Right lobe of liver (tissue), 6 donors: ENCODE measurements at regions of chr5 and their contacts with region 1.

Region 1: DNA sequence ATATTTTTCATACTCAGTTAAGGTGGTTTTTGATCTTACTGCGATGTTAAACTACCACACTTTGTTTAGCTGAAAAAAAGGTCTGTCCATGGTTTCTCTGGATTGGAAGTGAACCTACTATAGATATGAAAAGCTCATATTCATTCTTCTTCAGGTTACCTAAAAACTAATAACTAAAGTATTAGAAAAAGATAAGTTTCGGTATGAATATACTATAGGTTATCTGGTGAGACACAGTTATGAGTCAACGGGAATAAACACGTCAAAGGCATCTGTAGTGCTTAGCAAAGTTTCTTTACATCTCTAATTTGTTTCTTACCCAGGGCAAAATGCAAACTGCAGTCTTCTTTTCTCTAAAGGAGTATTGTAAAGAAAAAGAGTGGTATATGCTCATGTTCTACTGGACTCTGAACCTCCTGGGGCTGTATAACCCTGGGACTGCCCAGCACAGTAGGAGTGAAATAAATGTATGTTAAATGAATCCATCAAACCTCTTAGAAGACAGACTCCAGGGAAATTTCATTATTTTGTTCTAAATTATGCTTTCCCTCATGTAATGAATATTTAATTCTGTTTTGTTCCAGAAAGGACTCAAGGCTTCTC is 521.9 kb downstream of the PDE4D start:
- DNase-seq: no peak
- ATAC-seq: no peak
- H3K4me3 ChIP-seq: no peak overlapping the region
- H3K27ac ChIP-seq: no peak overlapping the region
- H3K4me1 ChIP-seq: no peaks in the 10 kb centered on the region
- H3K27me3 ChIP-seq: no peaks in the 10 kb centered on the region
- CTCF ChIP-seq: no peak
- POLR2A ChIP-seq: no peak

Region 2: GRCh38 chr5:59188419-59189225 is 183.0 kb before region 1 on chr5:
- intact Hi-C with region 1: loop called in 1 of 2 experiments (anchors 10 kb)
- DNase-seq: peak; percentile 64 to 74 (median 72)
- ATAC-seq: peak; percentile 88 to 98 (median 96)
- H3K4me3 ChIP-seq: peak overlapping the region in 1 of 3 donors; percentile 28
- H3K27ac ChIP-seq: no peak overlapping the region
- H3K4me1 ChIP-seq: no peaks in the 10 kb centered on the region
- H3K27me3 ChIP-seq: no peaks in the 10 kb centered on the region
- CTCF ChIP-seq: peak; percentile 71 to 83 (median 75)
- POLR2A ChIP-seq: no peak

Region 3: DNA sequence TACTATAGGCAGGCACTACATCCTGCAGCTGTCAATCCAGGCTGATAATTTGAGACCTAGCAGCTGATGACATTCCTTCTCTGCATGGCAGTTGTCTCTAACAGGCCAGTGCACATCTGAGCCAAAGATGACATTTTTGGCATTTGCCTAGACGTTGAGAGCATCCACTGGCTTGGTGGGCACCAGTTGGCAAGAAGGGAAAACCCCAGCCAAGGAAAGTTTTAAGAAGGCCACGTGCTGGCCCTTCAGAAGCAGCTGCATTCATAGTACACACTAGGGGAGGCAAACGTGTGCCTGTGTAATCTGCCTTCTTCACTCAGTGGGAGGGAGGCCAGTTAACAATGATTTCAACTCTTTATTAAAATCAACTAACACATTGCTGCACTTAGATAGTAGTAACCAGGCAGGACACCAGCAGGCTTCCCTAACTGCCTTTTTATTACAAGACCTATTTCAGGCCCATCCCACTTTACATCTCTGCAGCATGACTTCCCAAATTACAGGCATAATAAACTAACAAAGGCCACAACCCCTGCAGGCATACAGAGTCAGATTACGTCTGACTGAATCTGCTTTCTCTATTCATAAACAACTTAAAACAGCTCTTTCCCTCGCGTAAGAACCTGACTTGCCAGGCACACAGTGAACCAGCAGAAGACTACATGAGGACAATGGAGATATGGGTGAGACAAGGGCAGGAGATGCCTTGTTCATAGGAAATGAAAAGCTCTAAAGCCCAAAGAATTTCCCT is 54.4 kb before region 1 on chr5:
- intact Hi-C with region 1: no loop called
- DNase-seq: no peak
- ATAC-seq: peak in 2 of 4 donors; percentile 17 to 30
- H3K4me3 ChIP-seq: no peak overlapping the region
- H3K27ac ChIP-seq: no peak overlapping the region
- H3K4me1 ChIP-seq: no peaks in the 10 kb centered on the region
- H3K27me3 ChIP-seq: no peaks in the 10 kb centered on the region
- CTCF ChIP-seq: no peak
- POLR2A ChIP-seq: no peak

Region 4: GRCh38 chr5:59466271-59466670 is 94.6 kb after region 1 on chr5:
- intact Hi-C with region 1: no loop called
- DNase-seq: peak in 2 of 3 donors; percentile 23 to 55
- ATAC-seq: peak; percentile 83 to 98 (median 98)
- H3K4me3 ChIP-seq: no peak overlapping the region
- H3K27ac ChIP-seq: peak overlapping the region; percentile 30 to 77 (median 73)
- H3K4me1 ChIP-seq: peaks cover 0 to 18% (median 3%) of the 10 kb centered on the region in 4 donors
- H3K27me3 ChIP-seq: no peaks in the 10 kb centered on the region
- CTCF ChIP-seq: no peak
- POLR2A ChIP-seq: no peak

Region 5: DNA sequence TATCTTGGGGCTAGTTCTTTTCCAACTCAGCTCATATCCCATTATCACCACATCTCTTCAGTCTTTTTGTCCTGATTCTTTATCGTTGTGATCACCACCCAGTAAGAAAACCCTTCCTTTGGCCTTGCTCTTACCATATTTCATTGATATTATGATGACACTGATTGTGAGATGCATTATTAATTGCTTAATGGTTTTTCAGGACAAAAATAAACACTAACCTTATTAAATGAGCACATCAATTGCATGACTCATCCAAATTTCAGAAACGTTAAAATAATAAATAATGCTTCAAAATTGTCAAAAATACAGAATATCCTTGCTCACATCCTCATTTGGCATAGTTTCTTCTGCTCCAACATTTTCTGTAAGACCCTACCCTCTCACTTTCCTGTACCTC is 251.2 kb after region 1 on chr5:
- intact Hi-C with region 1: no loop called
- DNase-seq: no peak
- ATAC-seq: no peak
- H3K4me3 ChIP-seq: no peak overlapping the region
- H3K27ac ChIP-seq: no peak overlapping the region
- H3K4me1 ChIP-seq: no peaks in the 10 kb centered on the region
- H3K27me3 ChIP-seq: no peaks in the 10 kb centered on the region
- CTCF ChIP-seq: no peak
- POLR2A ChIP-seq: no peak

Region 6: DNA sequence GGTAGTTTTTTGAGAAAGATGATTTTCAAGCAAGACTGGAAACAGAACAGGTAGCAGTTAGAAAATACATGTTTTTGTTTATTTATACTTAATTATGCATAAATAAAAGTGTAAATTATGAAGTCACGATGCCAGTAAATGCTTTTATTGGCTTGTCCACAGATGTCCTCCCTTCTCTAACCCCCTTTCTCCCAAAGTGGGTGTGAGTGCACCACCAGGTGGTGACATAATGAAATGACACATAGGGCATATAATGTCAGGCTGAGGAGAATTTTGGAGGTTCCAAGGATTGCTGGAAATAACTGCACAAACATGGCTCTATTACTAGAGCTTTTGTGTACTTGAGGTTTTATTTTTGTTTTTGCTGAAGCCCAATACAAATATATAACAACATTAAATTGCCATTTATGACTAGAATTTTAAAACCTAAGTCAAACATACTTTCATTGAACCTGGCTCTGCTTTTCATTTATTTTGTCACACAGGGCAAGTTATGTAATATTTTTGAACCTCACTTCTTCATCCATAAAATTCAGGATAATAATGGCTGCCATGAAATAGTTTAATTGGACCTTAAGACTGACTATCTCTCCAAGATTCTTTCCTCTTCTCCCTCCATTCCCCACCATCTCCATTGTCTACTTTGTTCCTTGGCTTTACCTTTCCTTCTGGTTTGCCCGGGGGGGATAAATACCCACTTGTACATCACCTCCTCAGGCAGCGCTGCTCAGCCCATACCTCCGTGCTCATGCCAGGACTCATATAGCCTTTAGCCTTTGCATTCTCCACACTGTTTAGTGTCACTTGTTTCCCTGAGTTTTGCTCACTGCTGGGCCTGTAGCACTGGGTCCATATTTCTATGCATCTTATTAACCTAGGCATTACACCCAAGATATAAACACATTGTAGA is 353.1 kb after region 1 on chr5:
- intact Hi-C with region 1: no loop called
- DNase-seq: no peak
- ATAC-seq: peak; percentile 75 to 84 (median 80)
- H3K4me3 ChIP-seq: no peak overlapping the region
- H3K27ac ChIP-seq: no peak overlapping the region
- H3K4me1 ChIP-seq: no peaks in the 10 kb centered on the region
- H3K27me3 ChIP-seq: no peaks in the 10 kb centered on the region
- CTCF ChIP-seq: peak; percentile 51 to 74 (median 66)
- POLR2A ChIP-seq: no peak